Activated naive CD4-positive, alpha-beta T cell treated with anti-CD3 and anti-CD28 coated beads for 36 hours (primary cell): ENCODE measurements at regions of chr1 and their contacts with region 1.

Region 1: GRCh38 chr1:204806943-204807687 is 63.5 kb upstream of the NFASC start:
- DNase-seq: peak; percentile 92
- H3K4me3 Mint-ChIP-seq: peak overlapping the region; percentile 76
- H3K27ac Mint-ChIP-seq: peak overlapping the region; percentile 74
- H3K4me1 Mint-ChIP-seq: peaks cover 9% of the 10 kb centered on the region
- H3K27me3 Mint-ChIP-seq: no peaks in the 10 kb centered on the region

Region 2: GRCh38 chr1:203823306-203823705 is 983.8 kb before region 1 on chr1:
- CTCF ChIA-PET with region 1: no interaction called
- intact Hi-C with region 1: no loop called
- DNase-seq: no peak
- H3K4me3 Mint-ChIP-seq: no peak overlapping the region
- H3K27ac Mint-ChIP-seq: peak overlapping the region; percentile 65
- H3K4me1 Mint-ChIP-seq: peaks cover 15% of the 10 kb centered on the region
- H3K27me3 Mint-ChIP-seq: no peaks in the 10 kb centered on the region

Region 3: GRCh38 chr1:204506961-204507387 is 300.1 kb before region 1 on chr1:
- CTCF ChIA-PET with region 1: interaction called, 12 read pairs
- intact Hi-C with region 1: loop called (anchors 1 kb)
- DNase-seq: peak; percentile 95
- H3K4me3 Mint-ChIP-seq: peak overlapping the region; percentile 88
- H3K27ac Mint-ChIP-seq: peak overlapping the region; percentile 99
- H3K4me1 Mint-ChIP-seq: peaks cover 20% of the 10 kb centered on the region
- H3K27me3 Mint-ChIP-seq: peaks cover 4% of the 10 kb centered on the region

Region 4: DNA sequence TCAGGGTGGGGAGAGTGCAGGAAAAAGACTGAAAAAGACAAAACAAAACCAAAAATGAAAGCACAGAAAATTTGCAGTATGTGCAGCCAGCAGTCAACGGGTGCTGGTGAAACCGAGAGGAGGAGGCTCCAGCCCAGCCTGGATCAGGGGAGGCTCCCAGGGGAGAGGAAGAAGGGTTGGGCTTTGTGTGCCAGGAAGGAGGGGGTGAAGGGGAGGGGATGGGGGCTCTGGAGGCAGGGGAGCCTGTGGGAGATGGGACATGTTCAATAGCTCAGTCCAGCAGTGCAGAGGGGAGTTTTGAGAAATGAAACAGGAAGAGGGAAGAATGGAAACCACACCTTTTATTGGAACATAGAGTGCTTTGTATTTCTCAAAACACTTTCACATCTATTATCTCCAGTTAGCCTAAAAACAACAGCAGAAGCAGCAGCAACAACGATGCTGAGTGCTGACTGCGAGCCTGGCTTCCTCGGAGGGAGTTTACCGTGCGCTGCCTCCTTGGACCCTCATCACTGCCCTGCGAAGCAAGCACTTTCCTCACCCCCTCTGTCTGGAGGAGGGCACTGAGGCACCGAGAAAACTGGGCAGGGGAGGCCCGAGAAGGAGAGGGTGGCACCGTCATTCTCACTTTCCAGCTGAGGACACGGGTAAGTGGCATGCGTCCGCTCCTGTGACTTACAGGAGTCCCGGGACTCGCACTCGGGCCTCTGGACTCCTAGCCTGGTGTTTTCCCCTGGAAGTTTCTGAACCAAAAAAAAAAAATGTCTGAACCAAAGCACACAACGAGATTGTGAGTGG is 228.0 kb before region 1 on chr1:
- CTCF ChIA-PET with region 1: interaction called, 34 read pairs
- intact Hi-C with region 1: no loop called
- DNase-seq: peak; percentile 71
- H3K4me3 Mint-ChIP-seq: peak overlapping the region; percentile 70
- H3K27ac Mint-ChIP-seq: peak overlapping the region; percentile 87
- H3K4me1 Mint-ChIP-seq: peaks cover 26% of the 10 kb centered on the region
- H3K27me3 Mint-ChIP-seq: no peaks in the 10 kb centered on the region

Region 5: DNA sequence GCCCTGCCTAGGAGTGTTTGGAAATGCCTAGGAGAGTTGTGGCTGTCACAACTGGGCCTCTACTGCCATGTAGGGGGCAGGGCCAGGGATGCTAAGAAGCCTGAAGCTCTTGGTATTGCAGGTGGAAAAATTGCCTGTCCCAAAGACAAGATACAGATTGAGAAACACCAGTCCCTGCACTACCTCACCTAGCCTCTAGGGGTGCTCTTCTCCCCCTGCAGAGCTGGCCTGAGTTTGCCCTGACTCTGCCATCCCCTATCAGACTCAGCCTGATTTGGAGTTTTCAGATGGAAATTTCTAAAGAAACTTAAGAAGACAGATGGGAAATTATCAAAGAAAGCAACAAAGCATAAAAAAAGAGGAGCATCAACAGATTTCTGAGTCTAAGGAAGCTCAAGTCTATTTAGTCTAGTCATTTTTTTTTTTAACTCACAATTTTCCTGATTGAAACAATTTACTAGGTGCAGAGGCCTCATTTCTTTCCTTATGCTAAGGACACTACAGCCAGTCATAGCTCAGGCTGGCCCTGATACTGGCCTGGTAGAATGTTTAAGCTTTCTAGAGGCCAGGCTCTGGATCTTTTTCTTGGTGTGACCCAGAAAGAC is 60.2 kb before region 1 on chr1:
- CTCF ChIA-PET with region 1: interaction called, 13 read pairs
- intact Hi-C with region 1: loop called (anchors 1 kb)
- DNase-seq: peak; percentile 65
- H3K4me3 Mint-ChIP-seq: no peak overlapping the region
- H3K27ac Mint-ChIP-seq: no peak overlapping the region
- H3K4me1 Mint-ChIP-seq: no peaks in the 10 kb centered on the region
- H3K27me3 Mint-ChIP-seq: peaks cover 13% of the 10 kb centered on the region

Region 6: DNA sequence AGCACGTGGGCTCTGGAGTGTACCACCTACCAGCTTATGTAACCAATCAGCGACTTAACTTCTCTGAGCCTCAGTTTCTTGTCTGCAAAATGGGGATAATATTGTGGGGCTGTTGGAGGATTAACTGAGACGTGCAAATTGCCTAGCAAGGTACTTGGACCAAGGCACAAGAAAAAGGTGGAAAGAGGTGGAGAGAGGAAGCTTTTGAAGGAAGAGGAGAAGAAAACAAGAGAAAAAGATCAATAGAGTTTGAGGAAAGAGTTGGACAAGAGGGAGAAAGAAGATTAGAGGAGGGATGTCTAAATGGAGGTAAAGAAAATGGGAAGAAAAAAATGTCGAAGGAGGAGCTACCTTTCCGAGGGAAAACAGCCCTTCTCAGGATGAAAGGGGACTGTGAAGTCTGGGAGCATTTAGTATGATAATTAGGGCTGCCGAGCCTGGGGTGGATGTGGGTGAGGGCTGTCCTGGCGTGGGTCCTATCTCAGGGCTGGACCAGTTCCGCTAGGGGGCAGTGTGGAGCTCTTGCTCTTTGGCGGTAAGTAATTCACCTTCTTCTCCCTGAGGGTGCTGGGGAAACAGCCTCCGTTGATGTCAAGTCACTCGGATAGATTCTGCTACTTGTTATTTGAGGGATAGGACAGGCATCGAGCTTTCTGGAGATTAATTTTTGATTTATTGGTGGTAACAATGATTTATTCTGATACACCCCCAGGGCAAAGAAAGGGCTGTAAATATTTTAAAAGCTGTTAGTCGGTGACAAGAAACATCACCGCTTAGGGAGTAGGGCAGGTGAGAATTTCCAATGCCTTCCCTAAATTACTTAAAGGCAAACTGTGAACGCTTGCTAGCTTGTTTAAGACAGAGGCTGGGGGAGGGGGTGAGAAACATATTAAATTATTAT is 15.4 kb before region 1 on chr1:
- CTCF ChIA-PET with region 1: interaction called, 217 read pairs
- intact Hi-C with region 1: loop called (anchors 1 kb)
- DNase-seq: peak; percentile 92
- H3K4me3 Mint-ChIP-seq: no peak overlapping the region
- H3K27ac Mint-ChIP-seq: no peak overlapping the region
- H3K4me1 Mint-ChIP-seq: peaks cover 4% of the 10 kb centered on the region
- H3K27me3 Mint-ChIP-seq: peaks cover 20% of the 10 kb centered on the region

Region 7: DNA sequence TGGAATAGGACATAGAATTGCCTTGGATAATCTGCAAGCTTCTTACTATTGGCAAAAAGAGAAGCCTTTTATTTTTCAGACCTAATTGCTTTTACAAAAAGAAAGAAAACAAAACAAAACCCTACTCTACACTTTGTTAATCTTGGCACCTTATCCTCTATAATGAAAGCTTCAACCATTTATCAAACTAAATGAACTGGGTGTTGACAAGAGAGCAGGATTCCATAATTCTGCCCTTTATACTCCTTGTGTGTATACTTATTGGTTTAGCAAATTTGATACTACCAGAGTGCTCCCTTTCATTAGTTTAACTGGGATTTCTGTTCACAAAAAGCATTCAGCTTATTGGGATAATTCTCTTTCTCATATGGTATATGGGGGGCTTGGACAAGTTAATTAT is 417.6 kb after region 1 on chr1:
- CTCF ChIA-PET with region 1: no interaction called
- intact Hi-C with region 1: no loop called
- DNase-seq: no peak
- H3K4me3 Mint-ChIP-seq: no peak overlapping the region
- H3K27ac Mint-ChIP-seq: no peak overlapping the region
- H3K4me1 Mint-ChIP-seq: peaks cover 13% of the 10 kb centered on the region
- H3K27me3 Mint-ChIP-seq: peaks cover 16% of the 10 kb centered on the region